HEK293T (cell line): ENCODE measurements at regions of chr9 and their contacts with region 1.

Region 1: DNA sequence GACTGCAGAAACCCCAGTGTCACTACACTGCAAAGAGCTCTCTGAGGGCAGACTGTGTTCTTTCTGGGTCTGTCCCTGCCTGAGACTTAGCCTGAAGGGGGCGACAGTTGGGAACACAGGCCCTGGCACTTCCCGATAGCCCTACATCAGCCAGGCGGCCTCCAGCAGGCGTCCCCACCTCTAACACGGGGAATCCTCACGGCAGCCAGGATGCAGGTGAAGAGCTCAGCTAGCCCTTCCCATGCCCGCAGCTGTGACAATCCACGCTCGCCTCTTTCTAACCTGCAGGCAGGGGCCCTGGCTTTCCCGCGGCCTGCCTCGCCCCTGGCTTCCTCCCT is 5.9 kb downstream of the MED22 start:
- DNase-seq: peak; percentile 31

Region 2: DNA sequence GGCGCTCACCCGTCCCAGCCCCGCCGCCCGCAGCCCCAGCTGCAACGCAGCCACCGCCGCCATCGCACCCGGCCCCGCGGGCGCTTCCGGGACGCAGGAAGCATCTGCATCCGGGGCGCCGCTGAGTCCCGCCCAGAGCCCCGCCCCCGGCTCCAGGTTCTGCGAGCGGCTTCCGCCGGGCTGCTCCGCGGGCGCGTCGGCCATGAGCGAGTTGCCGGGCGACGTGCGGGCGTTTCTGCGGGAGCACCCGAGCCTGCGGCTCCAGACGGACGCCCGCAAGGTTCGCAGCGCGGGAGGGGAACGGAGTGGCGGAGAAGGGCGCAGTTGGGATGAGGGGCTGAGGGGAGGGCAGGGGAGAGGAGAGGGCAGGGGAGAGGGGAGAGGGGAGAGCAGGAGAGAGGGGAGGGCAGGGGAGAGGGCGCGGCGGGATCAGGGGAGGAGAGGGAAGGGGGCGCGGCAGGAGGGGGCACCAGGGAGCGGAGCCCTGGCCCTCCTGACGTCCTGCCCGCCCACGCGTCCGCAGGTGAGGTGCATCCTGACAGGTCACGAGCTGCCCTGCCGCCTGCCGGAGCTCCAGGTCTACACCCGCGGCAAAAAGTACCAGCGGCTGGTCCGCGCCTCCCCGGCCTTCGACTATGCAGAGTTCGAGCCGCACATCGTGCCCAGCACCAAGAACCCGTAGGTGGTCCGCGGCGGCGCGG is 14.5 kb after region 1 on chr9 and contains the starts of genes SURF1 and SURF2:
- CTCF ChIA-PET with region 1: interaction called, 4 read pairs
- POLR2A ChIA-PET with region 1: interaction called, 12 read pairs
- DNase-seq: peak; percentile 86

Region 3: DNA sequence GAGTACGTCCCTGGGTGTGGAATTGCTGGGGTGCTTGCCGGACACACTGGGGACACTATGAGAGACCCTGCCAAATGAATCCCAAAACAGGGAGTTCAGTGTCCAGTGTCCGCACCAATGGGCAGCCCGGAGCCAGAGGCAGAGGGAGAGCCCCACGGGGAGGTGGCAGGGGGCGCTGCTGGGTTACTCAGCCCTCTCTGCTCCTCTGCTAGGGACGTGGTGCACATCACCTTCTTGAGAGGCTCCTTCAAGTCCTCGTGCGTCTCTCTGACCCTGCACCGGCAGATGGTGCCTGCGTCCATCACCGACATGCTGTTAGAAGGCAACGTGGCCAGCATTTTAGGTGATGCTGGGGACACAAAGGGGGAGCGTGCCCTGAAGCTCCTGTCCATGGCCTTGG is 54.9 kb after region 1 on chr9:
- CTCF ChIA-PET with region 1: no interaction called
- POLR2A ChIA-PET with region 1: no interaction called
- DNase-seq: peak; percentile 48

Region 4: GRCh38 chr9:133463234-133463729 is 121.2 kb after region 1 on chr9:
- CTCF ChIA-PET with region 1: no interaction called
- POLR2A ChIA-PET with region 1: no interaction called
- DNase-seq: no peak